ENCODE measurements at regions of chr12 and their contacts with region 1.

Region 1: GRCh38 chr12:59834659-59835474 is 239.0 kb downstream of the SLC16A7 start:
- DNase-seq: peak; percentile 5
- ATAC-seq: no peak
- H3K4me3 ChIP-seq: no peak overlapping the region
- H3K27ac ChIP-seq: no peak overlapping the region
- H3K4me1 ChIP-seq: no peaks in the 10 kb centered on the region
- H3K27me3 ChIP-seq: no peaks in the 10 kb centered on the region
- CTCF ChIP-seq: no peak
- EP300 ChIP-seq: no peak
- POLR2A ChIP-seq: no peak
- RAD21 ChIP-seq: no peak

Region 2: DNA sequence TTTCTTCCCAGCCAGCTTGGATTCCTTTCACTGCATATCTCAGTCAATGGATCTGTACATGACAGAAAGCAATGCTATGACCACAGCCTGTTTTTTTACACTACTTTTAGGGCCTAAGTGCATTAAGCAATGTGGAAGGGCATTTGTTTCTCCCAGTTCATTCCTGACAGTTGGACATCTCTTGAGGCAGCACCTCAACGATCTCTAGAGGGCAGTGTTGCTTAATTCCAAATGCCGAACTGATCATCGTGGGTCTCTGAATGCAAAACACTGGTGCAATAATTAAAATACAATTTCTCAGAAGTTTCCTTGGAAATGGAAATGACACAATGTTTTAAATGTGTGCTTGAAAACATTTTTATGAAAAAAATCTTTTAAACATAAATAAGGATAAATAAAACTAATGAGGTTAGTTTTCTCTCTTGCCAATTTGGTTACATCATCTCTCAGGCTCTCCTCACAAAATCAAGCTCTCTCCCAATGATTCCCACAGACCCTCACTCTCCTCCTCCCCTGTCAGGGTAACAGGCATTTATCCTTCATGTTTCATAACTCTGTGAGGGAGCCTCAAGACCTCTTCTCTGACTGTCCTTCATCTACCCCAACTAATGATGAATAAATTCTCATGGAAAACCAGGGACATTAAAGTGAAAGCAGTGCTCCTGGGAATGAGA is 431.5 kb before region 1 on chr12:
- CTCF ChIA-PET with region 1: interaction called, 7 read pairs
- POLR2A ChIA-PET with region 1: no interaction called
- in situ Hi-C with region 1: no loop called
- intact Hi-C with region 1: loop called (anchors 1 kb)
- DNase-seq: peak; percentile 44
- ATAC-seq: peak; percentile 87
- H3K4me3 ChIP-seq: no peak overlapping the region
- H3K27ac ChIP-seq: no peak overlapping the region
- H3K4me1 ChIP-seq: no peaks in the 10 kb centered on the region
- H3K27me3 ChIP-seq: no peaks in the 10 kb centered on the region
- CTCF ChIP-seq: peak; percentile 71
- EP300 ChIP-seq: no peak
- POLR2A ChIP-seq: no peak
- RAD21 ChIP-seq: no peak

Region 3: GRCh38 chr12:59657266-59657665 is 177.6 kb before region 1 on chr12:
- CTCF ChIA-PET with region 1: no interaction called
- POLR2A ChIA-PET with region 1: no interaction called
- in situ Hi-C with region 1: no loop called
- intact Hi-C with region 1: no loop called
- DNase-seq: no peak
- ATAC-seq: no peak
- H3K4me3 ChIP-seq: no peak overlapping the region
- H3K27ac ChIP-seq: no peak overlapping the region
- H3K4me1 ChIP-seq: no peaks in the 10 kb centered on the region
- H3K27me3 ChIP-seq: no peaks in the 10 kb centered on the region
- CTCF ChIP-seq: no peak
- EP300 ChIP-seq: no peak
- POLR2A ChIP-seq: no peak
- RAD21 ChIP-seq: no peak

Region 4: GRCh38 chr12:59858508-59859170 is 23.8 kb after region 1 on chr12:
- CTCF ChIA-PET with region 1: no interaction called
- POLR2A ChIA-PET with region 1: no interaction called
- in situ Hi-C with region 1: no loop called
- intact Hi-C with region 1: no loop called
- DNase-seq: peak; percentile 59
- ATAC-seq: peak; percentile 100
- H3K4me3 ChIP-seq: no peak overlapping the region
- H3K27ac ChIP-seq: no peak overlapping the region
- H3K4me1 ChIP-seq: peaks cover 13% of the 10 kb centered on the region
- H3K27me3 ChIP-seq: no peaks in the 10 kb centered on the region
- CTCF ChIP-seq: no peak
- EP300 ChIP-seq: 0 out of 4 replicates have a peak, but pooled peaks of 1 of the 2 experiments have one; percentile 24
- POLR2A ChIP-seq: no peak
- RAD21 ChIP-seq: no peak